IMR-90 (cell line): ENCODE measurements at regions of chr9 and their contacts with region 1.

Region 1: GRCh38 chr9:16191691-16192402 is 639.0 kb downstream of the CCDC171 start:
- DNase-seq: peak; percentile 87
- ATAC-seq: peak; percentile 89
- H3K4me3 ChIP-seq: peak overlapping the region; percentile 1; the same call in 1 of the 2 replicates
- H3K27ac ChIP-seq: peak overlapping the region; percentile 92
- H3K4me1 ChIP-seq: peaks cover 28% of the 10 kb centered on the region
- H3K27me3 ChIP-seq: no peaks in the 10 kb centered on the region
- CTCF ChIP-seq: peak; percentile 91
- POLR2A ChIP-seq: no peak
- RAD21 ChIP-seq: peak; percentile 95

Region 2: GRCh38 chr9:15529566-15530324 is 662.1 kb before region 1 on chr9:
- CTCF ChIA-PET with region 1: no interaction called
- POLR2A ChIA-PET with region 1: no interaction called
- dilution Hi-C with region 1: no loop called
- in situ Hi-C with region 1: no loop called
- intact Hi-C with region 1: no loop called
- DNase-seq: no peak
- ATAC-seq: no peak
- H3K4me3 ChIP-seq: no peak overlapping the region
- H3K27ac ChIP-seq: no peak overlapping the region
- H3K4me1 ChIP-seq: no peaks in the 10 kb centered on the region
- H3K27me3 ChIP-seq: no peaks in the 10 kb centered on the region
- CTCF ChIP-seq: no peak
- POLR2A ChIP-seq: no peak
- RAD21 ChIP-seq: no peak

Region 3: DNA sequence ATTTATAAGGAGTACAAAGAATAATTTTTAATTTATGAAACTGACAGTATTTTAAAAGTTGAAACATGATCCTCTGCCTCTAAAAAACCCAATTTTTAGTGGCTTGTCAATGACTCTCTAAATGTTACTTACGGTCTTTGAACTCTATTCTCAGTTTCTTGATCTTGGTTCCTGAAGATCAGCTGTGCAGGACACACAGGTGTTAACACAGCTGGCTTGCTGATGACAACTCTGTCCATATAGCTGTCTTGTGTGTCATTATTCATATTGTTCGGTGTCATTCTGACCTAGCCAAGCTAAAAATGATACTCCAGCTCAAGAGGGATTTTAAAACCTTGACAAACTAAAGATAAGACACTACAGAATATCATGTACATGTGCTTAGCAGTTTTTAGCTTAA is 324.5 kb before region 1 on chr9:
- CTCF ChIA-PET with region 1: no interaction called
- POLR2A ChIA-PET with region 1: no interaction called
- dilution Hi-C with region 1: no loop called
- in situ Hi-C with region 1: no loop called
- intact Hi-C with region 1: no loop called
- DNase-seq: no peak
- ATAC-seq: no peak
- H3K4me3 ChIP-seq: no peak overlapping the region
- H3K27ac ChIP-seq: no peak overlapping the region
- H3K4me1 ChIP-seq: no peaks in the 10 kb centered on the region
- H3K27me3 ChIP-seq: no peaks in the 10 kb centered on the region
- CTCF ChIP-seq: no peak
- POLR2A ChIP-seq: no peak
- RAD21 ChIP-seq: no peak

Region 4: GRCh38 chr9:16039988-16040761 is 151.7 kb before region 1 on chr9:
- CTCF ChIA-PET with region 1: no interaction called
- POLR2A ChIA-PET with region 1: no interaction called
- dilution Hi-C with region 1: no loop called
- in situ Hi-C with region 1: no loop called
- intact Hi-C with region 1: loop called (anchors 5 kb)
- DNase-seq: peak; percentile 81
- ATAC-seq: peak; percentile 79
- H3K4me3 ChIP-seq: no peak overlapping the region
- H3K27ac ChIP-seq: peak overlapping the region; percentile 93
- H3K4me1 ChIP-seq: peaks cover 29% of the 10 kb centered on the region
- H3K27me3 ChIP-seq: no peaks in the 10 kb centered on the region
- CTCF ChIP-seq: no peak
- POLR2A ChIP-seq: no peak
- RAD21 ChIP-seq: no peak

Region 5: DNA sequence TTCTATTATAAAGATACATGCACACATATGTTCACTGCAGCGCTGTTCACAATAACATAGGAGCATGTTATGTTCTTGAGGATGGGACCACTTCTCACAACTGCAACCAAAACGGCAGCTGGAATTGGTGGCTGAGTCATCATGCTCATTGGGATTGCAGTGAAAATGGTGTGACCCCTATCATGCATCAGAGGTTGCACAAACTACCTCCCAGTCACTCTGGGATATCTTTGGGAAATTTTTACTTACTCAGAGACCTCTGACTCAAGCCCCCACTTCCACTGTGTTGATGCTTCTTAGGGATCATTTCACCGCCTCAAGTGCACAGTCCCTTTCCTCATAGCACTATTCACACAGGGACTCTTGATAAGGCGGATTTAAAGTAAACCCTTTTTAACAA is 204.5 kb after region 1 on chr9:
- CTCF ChIA-PET with region 1: no interaction called
- POLR2A ChIA-PET with region 1: no interaction called
- dilution Hi-C with region 1: no loop called
- in situ Hi-C with region 1: no loop called
- intact Hi-C with region 1: no loop called
- DNase-seq: peak; percentile 89
- ATAC-seq: peak; percentile 17; the same call in 1 of the 2 replicates
- H3K4me3 ChIP-seq: no peak overlapping the region
- H3K27ac ChIP-seq: no peak overlapping the region
- H3K4me1 ChIP-seq: peaks cover 2% of the 10 kb centered on the region
- H3K27me3 ChIP-seq: no peaks in the 10 kb centered on the region
- CTCF ChIP-seq: no peak
- POLR2A ChIP-seq: no peak
- RAD21 ChIP-seq: no peak

Region 6: DNA sequence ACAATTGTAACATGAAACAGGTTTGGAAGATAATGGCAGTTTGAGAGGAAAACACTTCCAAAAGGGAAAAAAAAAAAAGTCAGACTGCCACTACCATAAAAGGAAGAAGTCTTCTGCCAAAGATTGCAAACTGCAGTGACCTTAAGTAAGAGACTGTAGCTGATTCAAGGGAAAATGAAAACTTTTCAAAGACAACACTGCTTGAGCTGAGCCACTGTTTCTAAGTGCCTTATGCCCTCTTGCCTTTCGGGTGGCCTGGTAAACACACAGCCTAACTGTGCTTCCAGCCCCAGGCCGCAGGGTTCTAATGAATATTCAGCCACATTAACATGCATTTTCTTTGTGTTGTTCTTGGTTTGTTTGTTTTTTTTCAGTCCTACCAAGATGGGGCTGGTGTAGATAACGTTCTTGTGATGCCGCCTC is 324.0 kb after region 1 on chr9:
- CTCF ChIA-PET with region 1: no interaction called
- POLR2A ChIA-PET with region 1: no interaction called
- dilution Hi-C with region 1: no loop called
- in situ Hi-C with region 1: no loop called
- intact Hi-C with region 1: loop called (anchors 5 kb)
- DNase-seq: peak; percentile 84
- ATAC-seq: peak; percentile 81
- H3K4me3 ChIP-seq: no peak overlapping the region
- H3K27ac ChIP-seq: peak overlapping the region; percentile 100
- H3K4me1 ChIP-seq: peaks cover 18% of the 10 kb centered on the region
- H3K27me3 ChIP-seq: no peaks in the 10 kb centered on the region
- CTCF ChIP-seq: no peak
- POLR2A ChIP-seq: no peak
- RAD21 ChIP-seq: no peak

Region 7: DNA sequence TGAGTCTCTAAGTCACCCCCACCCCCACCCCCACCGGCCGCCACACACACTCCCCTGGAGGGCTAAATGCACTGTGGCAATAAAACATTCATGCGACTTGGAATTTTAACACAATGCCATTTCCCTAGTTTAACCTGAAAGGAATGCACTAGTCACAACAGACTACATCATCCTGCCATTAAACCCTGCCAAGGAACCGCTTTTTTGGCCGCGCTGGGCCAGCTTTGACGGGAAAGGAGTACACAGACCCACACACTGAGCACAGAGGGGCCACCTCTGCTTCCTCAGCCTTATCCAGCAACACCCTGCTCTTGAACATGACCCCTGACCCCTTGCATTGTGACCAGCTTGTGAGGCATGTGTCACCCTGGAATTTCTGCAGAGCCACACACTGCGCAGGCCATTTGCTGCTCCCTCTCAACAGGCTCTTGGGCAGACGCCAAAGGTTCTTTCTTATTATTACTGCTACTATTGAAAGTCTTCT is 513.3 kb after region 1 on chr9:
- CTCF ChIA-PET with region 1: no interaction called
- POLR2A ChIA-PET with region 1: no interaction called
- dilution Hi-C with region 1: no loop called
- in situ Hi-C with region 1: loop called (anchors 10 kb)
- intact Hi-C with region 1: loop called (anchors 2 kb)
- DNase-seq: peak; percentile 97
- ATAC-seq: peak; percentile 80
- H3K4me3 ChIP-seq: peak overlapping the region; percentile 42
- H3K27ac ChIP-seq: peak overlapping the region; percentile 99
- H3K4me1 ChIP-seq: peaks cover 22% of the 10 kb centered on the region
- H3K27me3 ChIP-seq: no peaks in the 10 kb centered on the region
- CTCF ChIP-seq: no peak
- POLR2A ChIP-seq: no peak
- RAD21 ChIP-seq: no peak; the same call in 1 of the 2 replicates

Region 8: DNA sequence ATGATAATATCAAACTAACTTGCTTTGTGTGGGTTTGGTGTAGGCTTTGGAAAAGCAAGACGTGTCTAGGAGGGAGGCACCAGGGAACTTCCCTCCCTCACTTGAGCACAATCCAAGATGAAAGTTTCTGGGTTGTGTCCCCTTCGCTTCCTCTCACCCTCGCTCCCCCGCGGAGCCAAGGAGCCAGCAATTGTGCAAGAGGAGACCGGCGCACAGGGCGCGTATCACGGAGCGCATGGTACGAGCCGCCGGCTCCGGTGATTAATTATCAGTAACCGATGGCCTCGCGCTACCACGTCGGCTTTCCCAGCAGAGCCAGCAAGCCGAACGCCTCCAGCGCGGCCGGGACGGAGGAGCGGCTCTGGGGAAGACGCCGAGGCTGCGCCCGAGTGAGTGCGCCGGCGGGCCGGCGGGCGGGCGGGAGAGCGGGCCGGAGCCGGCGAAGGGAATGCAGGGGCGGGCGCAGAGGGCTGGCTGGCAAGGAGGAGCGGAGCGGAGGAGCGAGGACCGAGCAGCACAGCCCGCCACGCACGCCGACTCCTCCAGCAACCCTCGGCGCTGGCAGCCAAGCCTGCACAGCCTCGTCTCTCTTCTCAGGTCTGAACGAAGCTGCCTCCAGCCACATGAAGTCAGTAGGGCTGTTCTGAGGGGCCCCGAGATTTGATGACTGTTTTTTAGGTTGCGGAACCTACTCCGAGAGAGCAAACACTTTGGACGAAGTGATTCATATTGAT is 535.0 kb after region 1 on chr9:
- CTCF ChIA-PET with region 1: no interaction called
- POLR2A ChIA-PET with region 1: no interaction called
- dilution Hi-C with region 1: no loop called
- in situ Hi-C with region 1: no loop called
- intact Hi-C with region 1: loop called (anchors 1 kb)
- DNase-seq: peak; percentile 83
- ATAC-seq: peak; percentile 83
- H3K4me3 ChIP-seq: peak overlapping the region; percentile 62
- H3K27ac ChIP-seq: peak overlapping the region; percentile 97
- H3K4me1 ChIP-seq: peaks cover 12% of the 10 kb centered on the region
- H3K27me3 ChIP-seq: no peaks in the 10 kb centered on the region
- CTCF ChIP-seq: no peak
- POLR2A ChIP-seq: peak; percentile 72
- RAD21 ChIP-seq: no peak